HCT116 (cell line): ENCODE measurements at regions of chr22 and their contacts with region 1.

Region 1: GRCh38 chr22:50691521-50691920 is 18.9 kb downstream of the SHANK3 start:
- DNase-seq: peak; percentile 29
- ATAC-seq: peak; percentile 54; the same call in 1 of the 2 replicates
- H3K4me3 ChIP-seq: no peak overlapping the region
- H3K27ac ChIP-seq: no peak overlapping the region
- H3K4me1 ChIP-seq: no peaks in the 10 kb centered on the region
- H3K27me3 ChIP-seq: no peaks in the 10 kb centered on the region
- CTCF ChIP-seq: peak; percentile 76 to 88 (median 84)
- POLR2A ChIP-seq: no peak
- RAD21 ChIP-seq: peak; percentile 84

Region 2: DNA sequence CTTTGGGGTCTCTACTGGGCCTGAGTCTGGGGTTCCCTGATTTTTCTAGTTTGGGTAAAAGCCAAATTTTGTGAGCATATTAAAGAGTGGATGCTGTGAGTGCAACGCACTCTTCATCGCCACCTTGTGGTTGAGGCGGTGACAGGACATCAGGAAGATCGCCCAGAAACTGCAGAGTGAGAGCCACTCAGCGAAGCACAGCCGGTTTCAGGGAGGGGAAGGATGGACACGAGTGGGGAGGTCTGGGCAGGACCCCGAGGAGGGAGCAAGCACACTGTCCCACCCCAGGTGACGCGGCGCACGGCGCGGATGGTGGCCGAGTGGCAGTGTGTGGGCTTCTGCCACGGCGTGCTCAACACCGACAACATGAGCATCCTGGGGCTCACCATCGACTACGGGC is 481.6 kb before region 1 on chr22:
- CTCF ChIA-PET with region 1: no interaction called
- POLR2A ChIA-PET with region 1: no interaction called
- RAD21 ChIA-PET with region 1: no interaction called
- intact Hi-C with region 1: no loop called
- DNase-seq: no peak
- ATAC-seq: peak; percentile 67
- H3K4me3 ChIP-seq: no peak overlapping the region
- H3K27ac ChIP-seq: no peak overlapping the region; the same call in 1 of the 2 replicates
- H3K4me1 ChIP-seq: peaks cover 0 to 16% of the 10 kb centered on the region in 2 experiments; a peak in 2 of 4 replicates
- H3K27me3 ChIP-seq: no peaks in the 10 kb centered on the region
- CTCF ChIP-seq: peak; percentile 75 to 89 (median 89)
- POLR2A ChIP-seq: no peak
- RAD21 ChIP-seq: peak; percentile 71

Region 3: DNA sequence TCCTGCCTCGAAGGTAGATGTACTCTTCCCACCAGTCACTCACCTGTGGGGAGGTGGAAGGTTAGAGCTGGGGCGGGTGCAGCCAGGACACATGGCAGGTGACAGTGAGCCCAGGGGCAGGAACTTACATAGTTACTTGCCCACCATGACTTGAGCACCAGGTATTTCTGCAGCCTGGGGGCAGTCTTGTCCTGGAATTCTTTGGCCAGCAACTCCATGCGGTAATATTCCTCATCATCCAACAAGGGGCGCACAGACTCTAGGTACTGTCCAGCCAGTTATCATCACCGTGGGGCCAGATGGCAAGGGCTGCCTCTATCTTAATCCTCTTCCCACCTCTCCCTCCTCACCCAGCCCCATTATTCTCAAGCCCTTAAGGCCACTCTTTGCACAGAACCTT is 115.5 kb before region 1 on chr22:
- CTCF ChIA-PET with region 1: no interaction called
- POLR2A ChIA-PET with region 1: no interaction called
- RAD21 ChIA-PET with region 1: no interaction called
- intact Hi-C with region 1: loop called (anchors 1 kb)
- DNase-seq: peak; percentile 52
- ATAC-seq: peak; percentile 81
- H3K4me3 ChIP-seq: no peak overlapping the region
- H3K27ac ChIP-seq: no peak overlapping the region
- H3K4me1 ChIP-seq: peaks cover 0 to 5% of the 10 kb centered on the region in 2 experiments; a peak in 2 of 4 replicates
- H3K27me3 ChIP-seq: no peaks in the 10 kb centered on the region
- CTCF ChIP-seq: peak; percentile 56 to 98 (median 69)
- POLR2A ChIP-seq: no peak
- RAD21 ChIP-seq: peak; percentile 94

Region 4: GRCh38 chr22:50627642-50628542 is 63.6 kb before region 1 on chr22 and contains the start of gene ARSA:
- CTCF ChIA-PET with region 1: interaction called, 3 read pairs
- POLR2A ChIA-PET with region 1: no interaction called
- RAD21 ChIA-PET with region 1: no interaction called
- intact Hi-C with region 1: loop called (anchors 2 kb)
- DNase-seq: no peak
- ATAC-seq: peak; percentile 82
- H3K4me3 ChIP-seq: peak within 1 kb of the TSS; percentile 71 to 88
- H3K27ac ChIP-seq: peak within 1 kb of the TSS; percentile 61
- H3K4me1 ChIP-seq: peaks cover 10 to 34% of the 10 kb centered on the region in 2 experiments; a peak in 3 of 4 replicates
- H3K27me3 ChIP-seq: no peaks in the 10 kb centered on the region
- CTCF ChIP-seq: peak in 2 of 3 experiments; percentile 15 to 23; a peak in 1 of 6 replicates
- POLR2A ChIP-seq: peak; percentile 60
- RAD21 ChIP-seq: peak; percentile 33
- total RNA-seq, gene ARSA: 16.4 TPM

Region 5: DNA sequence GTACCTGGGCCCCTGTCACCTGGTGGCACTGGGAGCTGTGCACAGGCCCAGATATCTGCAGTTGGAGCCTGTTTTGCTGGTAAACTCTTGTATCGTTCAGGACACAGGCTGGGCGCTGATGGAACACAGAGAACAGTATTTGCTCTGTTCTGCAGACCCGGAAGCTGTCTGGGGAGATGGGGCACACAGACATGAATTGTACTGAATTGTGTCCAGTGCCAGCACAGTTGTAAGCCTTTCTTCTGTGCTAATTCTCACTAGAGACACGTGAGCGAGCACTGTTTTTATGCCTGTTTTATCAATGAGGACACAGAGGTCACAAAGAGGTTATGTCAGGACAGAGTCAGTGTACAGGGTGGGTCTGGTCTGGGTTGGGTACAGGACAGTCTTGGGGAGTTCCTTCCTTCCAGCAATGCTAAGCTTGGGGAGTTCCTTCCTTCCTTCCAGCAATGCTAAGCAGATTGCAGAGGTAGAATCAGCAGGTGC is 22.1 kb after region 1 on chr22:
- CTCF ChIA-PET with region 1: no interaction called
- POLR2A ChIA-PET with region 1: no interaction called
- RAD21 ChIA-PET with region 1: no interaction called
- intact Hi-C with region 1: no loop called
- DNase-seq: no peak
- ATAC-seq: no peak
- H3K4me3 ChIP-seq: no peak overlapping the region
- H3K27ac ChIP-seq: no peak overlapping the region
- H3K4me1 ChIP-seq: no peaks in the 10 kb centered on the region
- H3K27me3 ChIP-seq: no peaks in the 10 kb centered on the region
- CTCF ChIP-seq: no peak
- POLR2A ChIP-seq: no peak
- RAD21 ChIP-seq: no peak